CD4-positive, alpha-beta memory T cell (primary cell): ENCODE measurements at regions of chr3 and their contacts with region 1.

Region 1: GRCh38 chr3:187164885-187165543 is 25.7 kb upstream of the RPL39L start:
- DNase-seq: peak; percentile 66 to 73 (median 70)
- H3K4me3 ChIP-seq: no peak overlapping the region
- H3K4me3 Mint-ChIP-seq: no peak overlapping the region
- H3K27ac ChIP-seq: no peak overlapping the region
- H3K27ac Mint-ChIP-seq: no peak overlapping the region
- H3K4me1 ChIP-seq: peaks cover 2% of the 10 kb centered on the region
- H3K4me1 Mint-ChIP-seq: peaks cover 0 to 8% (median 4%) of the 10 kb centered on the region in 4 donors
- H3K27me3 ChIP-seq: no peaks in the 10 kb centered on the region
- H3K27me3 Mint-ChIP-seq: peaks cover 6 to 7% of the 10 kb centered on the region in 2 donors

Region 2: GRCh38 chr3:187101184-187102072 is 63.6 kb before region 1 on chr3:
- CTCF ChIA-PET with region 1: interaction called, 16 read pairs
- POLR2A ChIA-PET with region 1: no interaction called
- intact Hi-C with region 1: no loop called
- DNase-seq: peak; percentile 43 to 57 (median 48)
- H3K4me3 ChIP-seq: peak overlapping the region; percentile 17 to 27
- H3K4me3 Mint-ChIP-seq: peak overlapping the region; percentile 70 to 91 (median 84)
- H3K27ac ChIP-seq: peak overlapping the region; percentile 18
- H3K27ac Mint-ChIP-seq: peak overlapping the region; percentile 4 to 93 (median 88)
- H3K4me1 ChIP-seq: peaks cover 23% of the 10 kb centered on the region
- H3K4me1 Mint-ChIP-seq: peaks cover 26 to 35% (median 28%) of the 10 kb centered on the region in 4 donors
- H3K27me3 ChIP-seq: no peaks in the 10 kb centered on the region
- H3K27me3 Mint-ChIP-seq: no peaks in the 10 kb centered on the region

Region 3: GRCh38 chr3:187107989-187108388 is 57.0 kb before region 1 on chr3:
- CTCF ChIA-PET with region 1: interaction called, 178 read pairs
- POLR2A ChIA-PET with region 1: interaction called, 5 read pairs
- intact Hi-C with region 1: loop called (anchors 1 kb)
- DNase-seq: no peak
- H3K4me3 ChIP-seq: no peak overlapping the region
- H3K4me3 Mint-ChIP-seq: no peak overlapping the region
- H3K27ac ChIP-seq: no peak overlapping the region
- H3K27ac Mint-ChIP-seq: peak overlapping the region in 1 of 7 donors; percentile 2
- H3K4me1 ChIP-seq: peaks cover 6% of the 10 kb centered on the region
- H3K4me1 Mint-ChIP-seq: peaks cover 2 to 12% (median 4%) of the 10 kb centered on the region in 4 donors
- H3K27me3 ChIP-seq: no peaks in the 10 kb centered on the region
- H3K27me3 Mint-ChIP-seq: no peaks in the 10 kb centered on the region

Region 4: DNA sequence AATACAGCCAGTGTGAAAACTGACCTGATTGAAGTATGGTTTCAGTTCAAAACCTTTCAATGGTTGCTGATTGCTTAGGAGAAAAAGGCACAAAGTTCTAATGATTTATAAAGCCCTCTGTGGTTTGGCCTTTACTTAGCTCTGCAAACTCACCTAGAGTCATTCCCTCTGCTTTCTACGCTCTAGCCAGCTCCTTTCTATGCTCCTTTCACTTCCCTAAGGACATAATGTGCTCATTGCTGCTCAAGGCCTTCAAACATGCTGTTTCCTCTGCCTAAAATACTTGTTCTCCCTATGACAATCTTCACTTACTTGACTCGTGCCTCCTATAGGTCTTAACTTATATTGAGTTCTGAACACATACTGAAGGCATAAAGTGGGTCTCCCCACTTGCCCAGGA is 44.7 kb before region 1 on chr3:
- CTCF ChIA-PET with region 1: interaction called, 178 read pairs
- POLR2A ChIA-PET with region 1: no interaction called
- intact Hi-C with region 1: no loop called
- DNase-seq: no peak
- H3K4me3 ChIP-seq: no peak overlapping the region
- H3K4me3 Mint-ChIP-seq: no peak overlapping the region
- H3K27ac ChIP-seq: no peak overlapping the region
- H3K27ac Mint-ChIP-seq: peak overlapping the region in 1 of 7 donors; percentile 19
- H3K4me1 ChIP-seq: no peaks in the 10 kb centered on the region
- H3K4me1 Mint-ChIP-seq: no peaks in the 10 kb centered on the region
- H3K27me3 ChIP-seq: no peaks in the 10 kb centered on the region
- H3K27me3 Mint-ChIP-seq: no peaks in the 10 kb centered on the region

Region 5: GRCh38 chr3:187130346-187131066 is 34.5 kb before region 1 on chr3:
- CTCF ChIA-PET with region 1: interaction called, 19 read pairs
- POLR2A ChIA-PET with region 1: interaction called, 3 read pairs
- intact Hi-C with region 1: no loop called
- DNase-seq: peak; percentile 74 to 86 (median 83)
- H3K4me3 ChIP-seq: peak overlapping the region in 1 of 2 donors; percentile 37
- H3K4me3 Mint-ChIP-seq: peak overlapping the region; percentile 22 to 82 (median 74)
- H3K27ac ChIP-seq: peak overlapping the region; percentile 74
- H3K27ac Mint-ChIP-seq: peak overlapping the region; percentile 93 to 99 (median 98)
- H3K4me1 ChIP-seq: peaks cover 26% of the 10 kb centered on the region
- H3K4me1 Mint-ChIP-seq: peaks cover 16 to 39% (median 27%) of the 10 kb centered on the region in 4 donors
- H3K27me3 ChIP-seq: no peaks in the 10 kb centered on the region
- H3K27me3 Mint-ChIP-seq: no peaks in the 10 kb centered on the region

Region 6: GRCh38 chr3:187150599-187150998 is 14.4 kb before region 1 on chr3:
- CTCF ChIA-PET with region 1: interaction called, 41 read pairs
- POLR2A ChIA-PET with region 1: interaction called, 3 read pairs
- intact Hi-C with region 1: loop called (anchors 2 kb)
- DNase-seq: peak; percentile 47 to 61 (median 55)
- H3K4me3 ChIP-seq: no peak overlapping the region
- H3K4me3 Mint-ChIP-seq: no peak overlapping the region
- H3K27ac ChIP-seq: no peak overlapping the region
- H3K27ac Mint-ChIP-seq: no peak overlapping the region
- H3K4me1 ChIP-seq: no peaks in the 10 kb centered on the region
- H3K4me1 Mint-ChIP-seq: peaks cover 0 to 6% (median under 1%) of the 10 kb centered on the region in 4 donors
- H3K27me3 ChIP-seq: no peaks in the 10 kb centered on the region
- H3K27me3 Mint-ChIP-seq: peaks cover 6 to 13% of the 10 kb centered on the region in 2 donors